ENCODE measurements at regions of chr1 and their contacts with region 1.

Region 1: DNA sequence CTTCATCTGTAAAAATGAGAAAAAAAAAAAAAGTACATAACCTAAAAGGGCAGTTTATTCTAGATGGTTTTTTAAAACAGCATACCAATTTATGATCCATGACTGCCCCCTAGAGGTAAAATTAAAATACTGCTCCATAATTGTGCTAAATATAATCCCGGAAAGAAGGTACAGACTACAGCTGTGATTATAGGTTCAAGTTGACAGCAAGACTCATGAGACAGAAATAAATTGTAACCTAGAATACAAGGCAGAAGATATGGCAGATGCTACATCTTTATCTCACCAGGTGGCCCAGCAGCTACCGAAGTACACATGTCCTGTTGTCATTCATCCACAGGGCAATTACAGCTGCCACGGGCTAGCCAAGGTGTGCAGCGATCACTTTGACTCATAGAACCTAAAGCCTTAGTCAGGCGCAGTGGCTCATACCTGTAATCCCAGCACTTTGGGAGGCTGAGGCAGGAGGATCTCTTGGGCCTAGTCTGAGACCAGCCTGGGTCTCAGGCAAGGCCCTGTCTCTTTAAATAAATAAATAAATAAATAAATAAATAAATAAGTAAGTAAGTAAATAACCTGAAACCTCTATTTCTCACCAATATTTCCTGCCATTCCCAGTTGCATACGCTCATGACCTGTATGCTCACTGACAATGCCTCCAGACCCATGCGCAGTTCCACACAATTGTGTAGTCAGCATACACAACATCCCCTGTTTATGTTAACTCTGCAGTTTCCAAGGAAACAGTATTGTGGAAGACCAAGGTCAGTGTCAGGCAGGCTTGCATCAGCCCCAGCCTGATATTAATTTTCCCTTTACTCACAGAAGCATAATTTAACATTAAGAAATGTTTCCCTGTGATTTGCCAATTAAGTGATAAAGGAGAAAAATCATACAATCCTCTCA is 18.3 kb upstream of the PPIE start:
- DNase-seq: peak in 1 of 2 experiments; percentile 54
- H3K4me3 ChIP-seq: no peak overlapping the region
- H3K4me3 Mint-ChIP-seq: no peak overlapping the region
- H3K27ac Mint-ChIP-seq: no peak overlapping the region
- H3K4me1 ChIP-seq: no peaks in the 10 kb centered on the region
- H3K4me1 Mint-ChIP-seq: no peaks in the 10 kb centered on the region
- H3K27me3 ChIP-seq: no peaks in the 10 kb centered on the region
- H3K27me3 Mint-ChIP-seq: peaks cover 8% of the 10 kb centered on the region
- CTCF ChIP-seq: peak; percentile 17 to 35

Region 2: GRCh38 chr1:39359028-39359570 is 361.2 kb before region 1 on chr1:
- CTCF ChIA-PET with region 1: no interaction called
- POLR2A ChIA-PET with region 1: no interaction called
- intact Hi-C with region 1: no loop called
- DNase-seq: no peak
- H3K4me3 ChIP-seq: no peak overlapping the region
- H3K4me3 Mint-ChIP-seq: no peak overlapping the region
- H3K27ac Mint-ChIP-seq: no peak overlapping the region
- H3K4me1 ChIP-seq: no peaks in the 10 kb centered on the region
- H3K4me1 Mint-ChIP-seq: no peaks in the 10 kb centered on the region
- H3K27me3 ChIP-seq: no peaks in the 10 kb centered on the region
- H3K27me3 Mint-ChIP-seq: no peaks in the 10 kb centered on the region
- CTCF ChIP-seq: no peak

Region 3: GRCh38 chr1:39590551-39590950 is 129.8 kb before region 1 on chr1:
- CTCF ChIA-PET with region 1: no interaction called
- POLR2A ChIA-PET with region 1: no interaction called
- intact Hi-C with region 1: no loop called
- DNase-seq: no peak
- H3K4me3 ChIP-seq: no peak overlapping the region
- H3K4me3 Mint-ChIP-seq: no peak overlapping the region
- H3K27ac Mint-ChIP-seq: no peak overlapping the region
- H3K4me1 ChIP-seq: no peaks in the 10 kb centered on the region
- H3K4me1 Mint-ChIP-seq: no peaks in the 10 kb centered on the region
- H3K27me3 ChIP-seq: no peaks in the 10 kb centered on the region
- H3K27me3 Mint-ChIP-seq: no peaks in the 10 kb centered on the region
- CTCF ChIP-seq: no peak

Region 4: DNA sequence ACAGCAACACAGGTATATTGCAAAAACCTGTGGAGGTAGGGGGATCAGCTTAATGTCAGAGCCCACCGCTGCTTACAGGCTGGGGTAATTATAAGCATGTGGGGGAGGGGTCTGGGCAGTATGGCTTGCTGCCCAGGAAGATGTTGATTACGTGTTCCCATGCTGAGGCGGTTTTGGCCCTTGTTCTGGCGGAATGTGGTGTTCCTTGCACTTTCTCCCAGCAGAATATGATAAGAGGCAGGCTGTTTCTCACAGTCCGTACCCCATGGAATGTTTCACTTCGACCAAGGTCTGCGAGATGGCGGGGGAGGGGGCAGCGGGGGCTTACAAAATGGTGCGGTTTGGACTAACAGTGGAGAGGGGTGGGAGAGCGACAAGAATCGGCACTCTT is 19.3 kb before region 1 on chr1:
- CTCF ChIA-PET with region 1: interaction called, 3 read pairs
- POLR2A ChIA-PET with region 1: no interaction called
- intact Hi-C with region 1: loop called (anchors 1 kb)
- DNase-seq: no peak
- H3K4me3 ChIP-seq: no peak overlapping the region
- H3K4me3 Mint-ChIP-seq: no peak overlapping the region
- H3K27ac Mint-ChIP-seq: no peak overlapping the region
- H3K4me1 ChIP-seq: no peaks in the 10 kb centered on the region
- H3K4me1 Mint-ChIP-seq: peaks cover 13% of the 10 kb centered on the region
- H3K27me3 ChIP-seq: no peaks in the 10 kb centered on the region
- H3K27me3 Mint-ChIP-seq: peaks cover 9% of the 10 kb centered on the region
- CTCF ChIP-seq: no peak

Region 5: DNA sequence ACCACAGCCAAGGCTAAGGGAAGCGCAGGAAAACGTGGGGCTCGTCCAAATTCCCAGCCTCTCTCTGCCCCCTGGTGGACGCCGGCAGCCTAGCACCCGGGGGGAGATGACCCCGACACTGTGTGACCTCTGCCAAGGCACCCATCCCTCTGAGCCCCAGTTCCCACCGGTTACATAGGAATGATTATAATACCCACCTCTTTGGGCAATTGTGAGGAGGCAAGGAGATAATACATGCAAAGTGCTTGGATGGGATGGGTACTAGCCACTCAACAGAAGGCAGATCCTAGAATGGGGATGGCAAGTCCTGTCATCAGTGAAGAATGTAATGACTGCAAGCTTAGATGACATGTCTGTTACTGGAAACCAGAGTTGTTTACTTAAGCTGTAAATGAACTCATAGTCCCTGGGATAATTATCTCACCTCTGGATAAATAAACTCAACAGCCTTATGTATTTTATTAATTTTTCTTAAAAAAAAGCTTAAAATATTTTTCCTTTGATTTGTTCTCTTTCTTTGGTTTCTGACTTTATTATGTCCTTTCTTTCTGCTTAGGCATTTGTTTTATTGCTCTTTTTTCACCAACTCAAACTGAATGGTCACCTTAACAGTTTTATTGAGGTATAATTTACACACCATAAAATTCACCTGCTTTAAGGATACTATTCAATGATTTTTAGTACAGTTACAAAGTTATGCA is 79.6 kb after region 1 on chr1:
- CTCF ChIA-PET with region 1: no interaction called
- POLR2A ChIA-PET with region 1: no interaction called
- intact Hi-C with region 1: loop called (anchors 5 kb)
- DNase-seq: peak; percentile 75 to 86
- H3K4me3 ChIP-seq: peak overlapping the region; percentile 25
- H3K4me3 Mint-ChIP-seq: peak overlapping the region; percentile 70
- H3K27ac Mint-ChIP-seq: peak overlapping the region; percentile 86
- H3K4me1 ChIP-seq: peaks cover 16% of the 10 kb centered on the region
- H3K4me1 Mint-ChIP-seq: no peaks in the 10 kb centered on the region
- H3K27me3 ChIP-seq: no peaks in the 10 kb centered on the region
- H3K27me3 Mint-ChIP-seq: no peaks in the 10 kb centered on the region
- CTCF ChIP-seq: peak; percentile 65 to 78

Measured in Caco-2 (cell line).